Activated CD4-positive, alpha-beta memory T cell treated with anti-CD3 and anti-CD28 coated beads, Interleukin-2, amount 10 ng/mL, durations not matched to agents 7 days and 5 days (primary cell): ENCODE measurements at regions of chr12 and their contacts with region 1.

Region 1: DNA sequence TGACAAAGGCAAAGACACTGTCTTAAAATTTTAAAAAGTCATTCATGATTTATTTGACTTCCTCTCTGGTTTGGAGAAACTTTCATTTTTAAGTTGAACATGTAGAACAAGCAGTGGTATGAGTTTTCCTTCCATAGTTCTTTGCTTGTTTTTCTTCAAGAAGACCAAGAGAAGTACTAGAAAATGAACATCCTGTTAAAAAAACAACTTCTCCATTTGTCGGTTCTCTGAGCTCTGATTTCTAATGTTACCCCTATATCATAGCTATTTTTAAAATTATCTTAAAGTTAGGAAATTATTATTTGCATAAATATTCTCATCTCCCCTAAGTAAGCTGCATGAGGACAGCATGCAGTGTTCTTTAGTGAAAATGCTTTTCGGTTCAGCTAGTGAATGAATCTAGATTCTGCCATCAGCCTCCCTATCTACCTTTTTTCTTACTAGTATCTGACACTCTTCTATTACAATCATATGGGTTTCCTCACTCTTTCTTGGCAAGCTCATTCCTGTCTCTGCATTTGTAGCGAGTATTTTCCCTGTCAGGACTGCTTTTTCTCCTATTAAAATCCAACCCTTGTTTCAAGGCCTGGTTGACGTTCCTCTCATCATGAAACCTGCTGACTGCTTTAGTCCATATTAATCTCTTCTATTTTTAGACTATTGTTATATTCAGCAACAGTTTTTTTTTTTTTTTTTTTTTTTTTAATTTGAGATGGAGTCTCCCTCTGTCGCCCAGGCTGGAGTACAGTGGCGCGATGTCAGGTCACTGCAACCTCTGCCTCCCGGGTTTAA is 15.8 kb downstream of the DIP2B start:
- DNase-seq: no peak
- H3K4me3 Mint-ChIP-seq: peak overlapping the region; percentile 15
- H3K27ac Mint-ChIP-seq: peak overlapping the region; percentile 70
- H3K4me1 Mint-ChIP-seq: peaks cover 35% of the 10 kb centered on the region
- H3K27me3 Mint-ChIP-seq: no peaks in the 10 kb centered on the region

Region 2: DNA sequence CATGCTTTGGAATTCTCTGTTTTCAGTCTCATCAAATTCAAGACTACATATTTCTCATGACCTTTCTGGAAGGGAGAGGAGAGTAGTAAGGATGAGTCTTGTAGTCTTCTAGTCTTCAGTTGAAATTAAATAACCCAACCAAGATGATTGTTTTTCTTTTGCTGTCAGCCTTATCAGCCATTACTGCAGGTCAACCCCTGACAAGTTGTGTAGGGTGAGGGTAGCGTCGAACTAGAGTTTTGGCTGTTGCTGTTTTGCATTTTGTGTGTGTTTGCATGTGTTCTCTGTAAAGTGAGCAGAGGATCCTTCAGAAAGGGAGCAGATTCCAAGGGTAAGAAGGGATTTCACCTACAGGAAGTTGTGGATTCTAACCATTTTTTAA is 12.6 kb after region 1 on chr12:
- CTCF ChIA-PET with region 1: no interaction called
- POLR2A ChIA-PET with region 1: interaction called, 15 read pairs
- DNase-seq: no peak
- H3K4me3 Mint-ChIP-seq: no peak overlapping the region
- H3K27ac Mint-ChIP-seq: no peak overlapping the region
- H3K4me1 Mint-ChIP-seq: peaks cover 30% of the 10 kb centered on the region
- H3K27me3 Mint-ChIP-seq: no peaks in the 10 kb centered on the region

Region 3: DNA sequence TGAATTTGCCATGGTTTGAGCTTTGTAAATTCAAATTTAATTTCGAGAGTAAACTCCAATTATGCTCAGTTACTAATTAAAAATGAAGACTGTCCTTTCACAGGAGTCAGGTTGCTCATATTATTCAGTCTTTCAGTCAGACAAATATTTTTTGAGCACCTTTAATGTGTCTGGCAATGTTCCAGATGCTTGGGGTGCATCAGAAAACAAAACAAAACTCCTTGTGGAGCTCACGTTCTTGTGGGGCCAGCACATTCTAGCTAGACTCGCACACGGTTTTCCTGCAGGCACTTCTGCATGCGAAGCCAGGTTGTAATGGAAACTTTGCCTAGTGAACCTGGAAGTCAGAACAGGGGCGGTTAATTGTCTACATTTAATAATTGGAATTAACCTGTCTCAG is 179.3 kb after region 1 on chr12:
- CTCF ChIA-PET with region 1: no interaction called
- POLR2A ChIA-PET with region 1: no interaction called
- DNase-seq: no peak
- H3K4me3 Mint-ChIP-seq: no peak overlapping the region
- H3K27ac Mint-ChIP-seq: no peak overlapping the region
- H3K4me1 Mint-ChIP-seq: no peaks in the 10 kb centered on the region
- H3K27me3 Mint-ChIP-seq: no peaks in the 10 kb centered on the region